Calu3 (cell line): ENCODE measurements at regions of chr14 and their contacts with region 1.

Region 1: GRCh38 chr14:78566026-78566858 is 396.1 kb downstream of the NRXN3 start:
- DNase-seq: peak; percentile 80
- H3K4me3 Mint-ChIP-seq: no peak overlapping the region
- H3K27ac Mint-ChIP-seq: no peak overlapping the region
- H3K4me1 Mint-ChIP-seq: no peaks in the 10 kb centered on the region
- H3K27me3 Mint-ChIP-seq: peaks cover 33% of the 10 kb centered on the region
- CTCF ChIP-seq: peak; percentile 57

Region 2: DNA sequence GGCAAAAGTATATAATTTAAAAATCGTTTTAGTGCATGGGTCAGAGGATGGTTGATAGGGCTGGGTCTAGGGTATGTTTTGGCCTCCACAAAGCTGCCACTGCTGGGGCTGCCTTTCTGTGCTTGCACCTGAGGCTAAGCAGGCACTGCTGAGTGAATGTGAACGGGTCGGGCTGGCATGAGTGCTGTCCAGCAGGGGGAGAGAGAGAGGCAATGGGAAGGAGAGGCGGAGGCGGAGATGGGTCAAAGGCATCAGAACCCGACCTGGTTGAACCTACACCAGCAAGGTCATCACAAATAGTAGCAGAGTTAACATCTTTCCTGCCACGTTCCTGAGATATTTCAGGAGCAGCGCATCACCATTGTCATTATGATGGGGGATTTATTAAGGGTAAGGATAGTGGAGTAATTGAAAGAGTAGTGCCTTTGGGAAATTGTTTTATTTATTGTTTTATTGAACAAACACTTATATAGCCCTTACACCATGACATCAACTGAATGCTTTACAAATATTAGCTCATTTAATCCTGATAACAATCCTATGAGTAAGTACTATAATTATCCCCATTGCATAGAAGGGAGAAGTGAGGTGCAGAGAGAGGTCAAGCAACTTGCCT is 401.9 kb before region 1 on chr14:
- CTCF ChIA-PET with region 1: interaction called, 4 read pairs
- intact Hi-C with region 1: loop called (anchors 5 kb)
- DNase-seq: peak; percentile 64
- H3K4me3 Mint-ChIP-seq: no peak overlapping the region
- H3K27ac Mint-ChIP-seq: no peak overlapping the region
- H3K4me1 Mint-ChIP-seq: peaks cover 11% of the 10 kb centered on the region
- H3K27me3 Mint-ChIP-seq: peaks cover 90% of the 10 kb centered on the region
- CTCF ChIP-seq: peak; percentile 48

Region 3: GRCh38 chr14:78425330-78425729 is 140.9 kb before region 1 on chr14:
- CTCF ChIA-PET with region 1: no interaction called
- intact Hi-C with region 1: no loop called
- DNase-seq: no peak
- H3K4me3 Mint-ChIP-seq: no peak overlapping the region
- H3K27ac Mint-ChIP-seq: no peak overlapping the region
- H3K4me1 Mint-ChIP-seq: no peaks in the 10 kb centered on the region
- H3K27me3 Mint-ChIP-seq: peaks cover 38% of the 10 kb centered on the region
- CTCF ChIP-seq: no peak

Region 4: GRCh38 chr14:78673845-78674244 is 107.6 kb after region 1 on chr14:
- CTCF ChIA-PET with region 1: no interaction called
- intact Hi-C with region 1: no loop called
- DNase-seq: no peak
- H3K4me3 Mint-ChIP-seq: no peak overlapping the region
- H3K27ac Mint-ChIP-seq: no peak overlapping the region
- H3K4me1 Mint-ChIP-seq: no peaks in the 10 kb centered on the region
- H3K27me3 Mint-ChIP-seq: no peaks in the 10 kb centered on the region
- CTCF ChIP-seq: no peak